CD4-positive, alpha-beta memory T cell (primary cell): ENCODE measurements at regions of chr14 and their contacts with region 1.

Region 1: DNA sequence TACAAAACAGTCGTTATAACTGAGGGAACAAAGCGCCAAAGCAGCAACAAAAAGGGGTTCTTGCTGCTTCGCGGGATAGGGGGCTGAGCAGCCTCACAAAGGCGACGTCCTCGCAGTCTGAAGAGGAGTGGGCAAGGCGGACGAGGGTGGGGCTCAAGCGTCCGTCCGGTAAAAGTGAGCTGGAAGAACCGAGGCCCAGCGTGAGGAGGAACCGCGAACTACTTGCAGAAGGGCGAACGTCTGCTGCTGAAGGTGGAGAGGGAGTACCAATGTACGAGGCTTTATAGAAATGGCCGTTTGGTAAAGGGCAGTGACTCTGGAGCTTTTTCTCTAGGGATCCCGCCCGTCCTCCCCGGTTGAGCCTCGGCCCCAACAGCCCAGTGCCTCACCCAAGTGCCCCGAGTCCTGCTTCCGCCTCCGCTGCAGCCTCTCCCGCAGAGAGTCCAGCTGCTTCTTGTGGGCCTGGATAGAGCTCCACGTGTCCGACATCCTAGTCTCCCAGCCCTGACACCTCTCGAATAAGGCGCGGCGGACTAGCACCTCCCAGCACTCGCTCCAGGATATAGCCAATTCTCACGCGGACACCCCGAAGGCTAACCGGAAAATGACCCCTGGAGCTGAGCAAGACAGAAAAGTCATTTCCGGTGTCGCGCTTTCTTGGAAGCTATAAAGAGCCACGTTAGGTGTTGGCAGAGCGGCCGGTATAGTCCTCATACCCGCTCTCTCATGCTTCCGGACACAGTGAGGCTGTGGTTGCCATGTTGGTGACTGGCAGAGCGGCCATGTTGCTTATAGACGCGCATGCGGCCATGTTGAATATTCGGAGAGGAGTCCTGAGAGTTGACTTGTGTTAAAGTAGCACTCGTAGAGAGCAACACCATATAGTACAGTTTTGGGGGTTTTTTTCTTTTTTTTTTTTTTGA is at the start of gene METTL3:
- DNase-seq: peak; percentile 91 to 97 (median 92)
- H3K4me3 ChIP-seq: peak within 1 kb of the TSS; percentile 93 to 100
- H3K4me3 Mint-ChIP-seq: peak within 1 kb of the TSS; percentile 97 to 100 (median 98)
- H3K27ac ChIP-seq: peak within 1 kb of the TSS; percentile 88
- H3K27ac Mint-ChIP-seq: peak within 1 kb of the TSS; percentile 94 to 100 (median 99)
- H3K4me1 ChIP-seq: peaks cover 38% of the 10 kb centered on the region
- H3K4me1 Mint-ChIP-seq: peaks cover 27 to 51% (median 37%) of the 10 kb centered on the region in 4 donors
- H3K27me3 ChIP-seq: no peaks in the 10 kb centered on the region
- H3K27me3 Mint-ChIP-seq: no peaks in the 10 kb centered on the region
- total RNA-seq, gene METTL3: 93.4 to 98.9 TPM

Region 2: DNA sequence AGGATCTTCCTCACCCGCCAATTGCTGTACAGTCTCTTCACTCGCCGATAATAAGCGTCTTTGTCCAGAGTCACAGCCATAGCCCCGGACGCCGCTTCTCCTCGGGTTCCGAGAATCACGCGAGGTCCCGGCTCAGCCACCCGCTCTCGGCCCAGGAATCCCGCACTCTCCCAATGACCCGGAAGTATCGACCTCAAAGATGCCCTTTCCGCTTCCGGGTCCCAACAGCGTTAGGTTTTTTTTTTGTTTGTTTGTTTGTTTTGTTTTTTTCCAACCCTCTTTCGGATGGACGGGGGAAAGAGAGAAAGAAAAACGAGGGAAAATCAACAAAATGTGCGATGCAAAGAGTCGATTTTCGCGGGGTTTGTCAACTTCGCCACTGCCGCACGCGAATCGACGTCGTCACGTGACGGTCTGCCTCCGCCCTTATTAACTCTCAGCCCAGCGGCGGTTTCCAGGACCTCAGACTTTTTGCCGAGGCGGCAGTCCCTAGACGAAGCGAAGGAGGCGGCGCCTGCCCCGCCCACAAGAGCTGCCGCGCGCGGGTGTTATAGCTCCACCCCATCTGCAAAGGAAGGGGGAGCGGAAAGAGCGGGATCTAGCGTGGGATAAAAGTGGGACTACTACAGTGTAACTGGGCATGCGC is 127.0 kb before region 1 on chr14 and contains the start of gene SUPT16H:
- CTCF ChIA-PET with region 1: no interaction called
- POLR2A ChIA-PET with region 1: interaction called, 4 read pairs
- intact Hi-C with region 1: loop called (anchors 1 kb)
- DNase-seq: peak; percentile 91 to 96 (median 93)
- H3K4me3 ChIP-seq: peak within 1 kb of the TSS; percentile 98 to 99
- H3K4me3 Mint-ChIP-seq: peak within 1 kb of the TSS; percentile 95 to 100 (median 97)
- H3K27ac ChIP-seq: peak within 1 kb of the TSS; percentile 82
- H3K27ac Mint-ChIP-seq: peak within 1 kb of the TSS; percentile 96 to 100 (median 99)
- H3K4me1 ChIP-seq: peaks cover 47% of the 10 kb centered on the region
- H3K4me1 Mint-ChIP-seq: peaks cover 25 to 53% (median 38%) of the 10 kb centered on the region in 4 donors
- H3K27me3 ChIP-seq: no peaks in the 10 kb centered on the region
- H3K27me3 Mint-ChIP-seq: no peaks in the 10 kb centered on the region
- total RNA-seq, gene SUPT16H: 84.5 to 87.2 TPM

Region 3: GRCh38 chr14:21455911-21456667 is 54.9 kb before region 1 on chr14 and contains the start of gene CHD8:
- CTCF ChIA-PET with region 1: interaction called, 15 read pairs
- POLR2A ChIA-PET with region 1: interaction called, 25 read pairs
- intact Hi-C with region 1: loop called (anchors 1 kb)
- DNase-seq: peak; percentile 99 to 100 (median 100)
- H3K4me3 ChIP-seq: peak within 1 kb of the TSS; percentile 75 to 77
- H3K4me3 Mint-ChIP-seq: peak within 1 kb of the TSS; percentile 93 to 99 (median 96)
- H3K27ac ChIP-seq: peak within 1 kb of the TSS; percentile 88
- H3K27ac Mint-ChIP-seq: peak within 1 kb of the TSS; percentile 94 to 100 (median 99)
- H3K4me1 ChIP-seq: peaks cover 47% of the 10 kb centered on the region
- H3K4me1 Mint-ChIP-seq: peaks cover 23 to 46% (median 34%) of the 10 kb centered on the region in 4 donors
- H3K27me3 ChIP-seq: no peaks in the 10 kb centered on the region
- H3K27me3 Mint-ChIP-seq: no peaks in the 10 kb centered on the region
- total RNA-seq, gene CHD8: 131 to 132 TPM

Region 4: GRCh38 chr14:21498553-21499526 is 12.2 kb before region 1 on chr14:
- CTCF ChIA-PET with region 1: interaction called, 79 read pairs
- POLR2A ChIA-PET with region 1: interaction called, 20 read pairs
- intact Hi-C with region 1: no loop called
- DNase-seq: peak; percentile 50 to 65 (median 58)
- H3K4me3 ChIP-seq: no peak overlapping the region
- H3K4me3 Mint-ChIP-seq: peak overlapping the region in 5 of 8 donors; percentile 2 to 75 (median 41)
- H3K27ac ChIP-seq: peak overlapping the region; percentile 55
- H3K27ac Mint-ChIP-seq: peak overlapping the region; percentile 55 to 92 (median 82)
- H3K4me1 ChIP-seq: peaks cover 15% of the 10 kb centered on the region
- H3K4me1 Mint-ChIP-seq: peaks cover 18 to 43% (median 22%) of the 10 kb centered on the region in 4 donors
- H3K27me3 ChIP-seq: no peaks in the 10 kb centered on the region
- H3K27me3 Mint-ChIP-seq: no peaks in the 10 kb centered on the region

Region 5: DNA sequence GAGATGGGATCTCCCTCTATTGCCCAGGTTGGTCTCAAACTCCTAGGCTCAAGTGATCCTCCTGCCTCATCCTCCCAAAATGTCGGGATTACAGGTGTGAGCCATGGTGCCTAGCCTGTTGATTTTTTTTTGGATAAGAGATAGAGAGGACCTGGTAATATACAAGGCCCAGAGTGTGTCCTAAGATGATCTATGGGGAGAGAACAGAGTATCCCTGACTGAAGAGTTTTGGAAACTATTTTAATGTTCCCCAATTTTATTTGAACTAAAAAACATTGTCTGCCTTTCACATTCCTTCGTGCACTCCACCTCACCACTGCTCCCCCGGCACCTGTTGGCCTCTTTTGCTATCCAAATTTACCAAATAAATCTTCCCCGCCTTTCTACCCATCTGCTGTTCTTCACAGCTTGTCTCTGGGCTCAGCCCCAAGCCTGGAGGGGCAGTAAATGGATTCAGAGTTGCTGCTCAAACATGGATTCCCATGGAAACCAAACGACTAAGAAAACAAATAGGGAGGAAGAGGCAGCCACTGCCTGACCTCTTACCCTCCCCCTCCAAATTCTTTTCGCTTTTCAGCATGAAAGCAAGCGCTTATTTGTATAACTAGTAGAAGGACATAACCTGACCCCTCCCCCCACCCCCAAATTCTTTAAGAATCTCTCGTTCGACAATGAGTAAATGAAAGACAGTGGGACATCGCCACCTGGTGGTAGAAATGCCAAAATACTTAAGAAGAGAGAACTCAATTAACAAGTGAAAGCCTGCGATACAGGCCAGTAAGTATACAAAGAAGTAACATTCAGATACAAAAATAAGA is 46.3 kb after region 1 on chr14:
- CTCF ChIA-PET with region 1: no interaction called
- POLR2A ChIA-PET with region 1: interaction called, 3 read pairs
- intact Hi-C with region 1: loop called (anchors 1 kb)
- DNase-seq: peak; percentile 71 to 77 (median 75)
- H3K4me3 ChIP-seq: peak overlapping the region in 1 of 2 donors; percentile 35
- H3K4me3 Mint-ChIP-seq: peak overlapping the region in 7 of 8 donors; percentile 0 to 58 (median 6)
- H3K27ac ChIP-seq: no peak overlapping the region
- H3K27ac Mint-ChIP-seq: peak overlapping the region in 5 of 7 donors; percentile 3 to 90 (median 83)
- H3K4me1 ChIP-seq: peaks cover 6% of the 10 kb centered on the region
- H3K4me1 Mint-ChIP-seq: peaks cover 4 to 11% (median 6%) of the 10 kb centered on the region in 4 donors
- H3K27me3 ChIP-seq: no peaks in the 10 kb centered on the region
- H3K27me3 Mint-ChIP-seq: no peaks in the 10 kb centered on the region